HepG2 (cell line): ENCODE measurements at regions of chr2 and their contacts with region 1.

Region 1: DNA sequence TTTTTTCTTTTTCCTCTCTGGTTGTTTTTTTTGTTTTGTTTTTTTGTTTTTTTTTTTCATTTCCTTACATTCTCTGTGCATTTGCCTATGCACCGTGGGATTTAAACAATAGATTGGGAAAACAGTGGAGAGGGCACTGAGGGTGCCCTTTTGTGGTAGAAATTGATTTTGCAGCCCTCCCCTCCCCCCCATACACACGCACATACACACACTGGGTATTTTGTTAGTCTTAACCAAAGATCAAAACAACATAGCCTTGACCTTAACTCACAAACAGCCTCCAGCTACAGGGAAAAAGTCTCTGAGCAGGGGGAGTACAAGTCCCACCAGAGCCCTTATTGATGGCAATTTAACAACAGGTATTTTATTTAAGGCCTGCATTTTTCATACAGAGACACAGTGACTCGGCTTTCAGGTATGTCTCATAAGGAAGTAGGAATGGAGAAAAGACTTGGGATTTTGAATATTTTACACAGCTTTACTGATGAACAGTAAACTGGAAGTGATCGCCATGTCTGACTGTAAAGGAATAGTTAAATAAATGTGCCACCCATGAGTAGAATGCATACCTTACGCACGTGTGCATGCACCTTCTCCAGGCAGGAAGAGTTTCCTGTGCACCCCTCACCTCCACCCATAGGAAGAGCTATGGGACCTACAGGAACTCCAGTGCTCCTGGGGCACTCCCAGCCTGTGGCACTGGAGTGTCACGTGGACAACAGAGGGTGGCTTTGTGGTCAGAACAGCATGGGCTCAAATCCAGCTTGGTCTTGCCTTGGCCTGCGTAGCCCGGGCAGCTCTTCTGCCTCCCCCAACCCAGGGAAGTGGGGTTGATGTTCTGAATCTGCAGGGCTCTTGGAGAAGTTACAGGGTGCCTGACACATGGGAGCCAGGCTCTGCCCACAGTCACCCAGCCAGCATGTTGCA is 266.4 kb downstream of the ANAPC1 start:
- DNase-seq: peak; percentile 85
- ATAC-seq: peak; percentile 87
- H3K4me3 ChIP-seq: peak overlapping the region; percentile 5 to 51 (median 24); a peak in 3 of 6 replicates
- H3K27ac ChIP-seq: peak overlapping the region; percentile 56
- H3K4me1 ChIP-seq: peaks cover 39% of the 10 kb centered on the region
- H3K27me3 ChIP-seq: no peaks in the 10 kb centered on the region
- CTCF ChIP-seq: peak; percentile 38
- EP300 ChIP-seq: peak in 1 of 2 experiments; percentile 92; a peak in 2 of 4 replicates
- POLR2A ChIP-seq: peak in 1 of 2 experiments; percentile 24; a peak in 1 of 4 replicates
- RAD21 ChIP-seq: no peak

Region 2: GRCh38 chr2:111659416-111660281 is 42.1 kb after region 1 on chr2:
- CTCF ChIA-PET with region 1: no interaction called
- POLR2A ChIA-PET with region 1: interaction called, 11 read pairs
- in situ Hi-C with region 1: no loop called
- intact Hi-C with region 1: loop called (anchors 5 kb)
- DNase-seq: peak; percentile 87
- ATAC-seq: peak; percentile 68
- H3K4me3 ChIP-seq: no peak overlapping the region; a peak in 1 of 6 replicates
- H3K27ac ChIP-seq: no peak overlapping the region
- H3K4me1 ChIP-seq: peaks cover 29% of the 10 kb centered on the region
- H3K27me3 ChIP-seq: no peaks in the 10 kb centered on the region; a peak in 2 of 5 replicates
- CTCF ChIP-seq: no peak
- EP300 ChIP-seq: peak in 1 of 2 experiments; percentile 20; a peak in 1 of 4 replicates
- POLR2A ChIP-seq: no peak
- RAD21 ChIP-seq: no peak

Region 3: DNA sequence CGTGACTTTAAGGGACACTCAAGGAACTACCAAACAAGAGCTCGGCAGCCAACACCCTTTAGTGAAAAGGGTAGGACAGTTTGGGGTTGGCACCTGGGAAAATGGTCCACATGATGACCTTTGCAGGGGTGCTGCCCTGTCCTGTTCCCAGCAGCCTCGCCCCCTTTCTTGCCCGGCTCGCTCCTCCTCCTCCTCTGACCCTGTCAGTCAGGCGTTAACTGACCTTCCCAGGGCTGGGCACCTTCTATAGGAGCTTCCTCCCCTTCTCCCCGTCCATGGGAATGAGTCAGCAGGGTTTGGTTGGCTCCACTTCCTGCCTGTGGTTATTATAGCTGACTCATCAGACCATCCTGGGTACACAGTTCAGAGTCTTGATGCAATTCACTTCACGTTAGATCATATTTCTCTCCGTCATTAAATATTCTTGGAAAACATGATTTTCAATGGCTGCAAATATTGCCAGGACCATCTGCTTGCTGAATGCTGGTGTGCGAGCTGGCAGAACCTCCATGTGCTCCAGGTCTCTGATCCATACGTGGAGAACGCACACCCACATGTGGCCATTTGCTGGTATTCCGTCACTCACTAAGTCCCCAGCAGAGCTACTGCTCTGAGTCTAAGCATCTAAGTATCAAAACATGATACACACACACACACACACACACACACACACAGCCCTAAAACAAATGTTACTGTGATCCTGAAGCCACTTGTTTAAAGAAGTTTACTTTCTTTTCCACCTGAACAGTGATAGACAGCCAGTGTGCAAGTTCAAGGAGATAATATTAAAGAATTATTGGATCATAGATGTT is 81.4 kb after region 1 on chr2:
- CTCF ChIA-PET with region 1: no interaction called
- POLR2A ChIA-PET with region 1: interaction called, 11 read pairs
- in situ Hi-C with region 1: no loop called
- intact Hi-C with region 1: no loop called
- DNase-seq: peak; percentile 94
- ATAC-seq: peak; percentile 91
- H3K4me3 ChIP-seq: peak overlapping the region; percentile 38 to 62 (median 43); a peak in 5 of 6 replicates
- H3K27ac ChIP-seq: peak overlapping the region; percentile 37
- H3K4me1 ChIP-seq: peaks cover 41% of the 10 kb centered on the region
- H3K27me3 ChIP-seq: no peaks in the 10 kb centered on the region
- CTCF ChIP-seq: peak; percentile 95
- EP300 ChIP-seq: peak; percentile 12 to 74; a peak in 2 of 4 replicates
- POLR2A ChIP-seq: peak; percentile 26 to 44; a peak in 1 of 4 replicates
- RAD21 ChIP-seq: peak; percentile 91